Caco-2 (cell line): ENCODE measurements at regions of chr11 and their contacts with region 1.

Region 1: DNA sequence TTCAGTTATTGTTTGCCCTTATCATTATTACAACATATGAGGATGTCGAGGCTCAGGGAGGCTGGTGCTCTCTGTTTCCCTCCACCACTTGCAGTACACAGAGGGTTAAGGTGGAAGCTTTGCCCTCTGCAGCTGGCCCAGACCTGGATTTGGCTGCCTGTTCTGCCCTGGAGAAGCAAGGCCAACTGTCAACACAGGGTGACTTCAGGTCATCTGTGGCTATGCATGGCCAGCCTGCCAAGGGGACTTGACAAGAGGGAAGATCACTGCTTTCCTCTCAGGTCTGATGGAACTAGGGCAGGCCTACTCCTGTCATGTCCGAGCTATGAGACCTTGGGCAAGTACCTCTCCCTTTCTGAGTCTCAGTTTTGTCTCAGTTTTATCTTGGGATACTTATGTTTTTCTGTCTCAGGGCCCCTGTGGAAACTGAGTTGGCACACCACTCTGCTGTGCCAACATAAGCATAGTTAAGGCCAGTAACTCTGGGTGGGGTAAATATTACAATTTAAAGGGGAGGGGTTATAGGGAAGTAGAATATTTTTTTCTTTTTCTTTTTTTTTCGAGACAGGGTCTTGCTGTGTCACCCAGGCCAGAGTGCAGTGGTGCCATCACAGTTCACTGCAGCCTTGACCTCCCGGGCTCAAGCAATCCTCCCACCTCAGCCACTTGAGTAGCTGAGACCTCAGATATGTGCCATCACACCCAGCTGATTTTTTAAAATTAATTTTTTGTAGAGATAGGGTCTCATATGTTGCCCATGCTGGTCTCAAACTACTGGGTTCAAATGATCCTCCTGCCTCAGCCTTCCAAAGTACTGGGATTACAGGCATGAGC is 2.4 kb upstream of the THRSP start:
- DNase-seq: peak; percentile 52 to 65
- H3K4me3 ChIP-seq: no peak overlapping the region
- H3K4me3 Mint-ChIP-seq: no peak overlapping the region
- H3K27ac Mint-ChIP-seq: peak overlapping the region; percentile 70
- H3K4me1 ChIP-seq: peaks cover 31% of the 10 kb centered on the region
- H3K4me1 Mint-ChIP-seq: peaks cover 15% of the 10 kb centered on the region
- H3K27me3 ChIP-seq: no peaks in the 10 kb centered on the region
- H3K27me3 Mint-ChIP-seq: no peaks in the 10 kb centered on the region
- CTCF ChIP-seq: no peak

Region 2: DNA sequence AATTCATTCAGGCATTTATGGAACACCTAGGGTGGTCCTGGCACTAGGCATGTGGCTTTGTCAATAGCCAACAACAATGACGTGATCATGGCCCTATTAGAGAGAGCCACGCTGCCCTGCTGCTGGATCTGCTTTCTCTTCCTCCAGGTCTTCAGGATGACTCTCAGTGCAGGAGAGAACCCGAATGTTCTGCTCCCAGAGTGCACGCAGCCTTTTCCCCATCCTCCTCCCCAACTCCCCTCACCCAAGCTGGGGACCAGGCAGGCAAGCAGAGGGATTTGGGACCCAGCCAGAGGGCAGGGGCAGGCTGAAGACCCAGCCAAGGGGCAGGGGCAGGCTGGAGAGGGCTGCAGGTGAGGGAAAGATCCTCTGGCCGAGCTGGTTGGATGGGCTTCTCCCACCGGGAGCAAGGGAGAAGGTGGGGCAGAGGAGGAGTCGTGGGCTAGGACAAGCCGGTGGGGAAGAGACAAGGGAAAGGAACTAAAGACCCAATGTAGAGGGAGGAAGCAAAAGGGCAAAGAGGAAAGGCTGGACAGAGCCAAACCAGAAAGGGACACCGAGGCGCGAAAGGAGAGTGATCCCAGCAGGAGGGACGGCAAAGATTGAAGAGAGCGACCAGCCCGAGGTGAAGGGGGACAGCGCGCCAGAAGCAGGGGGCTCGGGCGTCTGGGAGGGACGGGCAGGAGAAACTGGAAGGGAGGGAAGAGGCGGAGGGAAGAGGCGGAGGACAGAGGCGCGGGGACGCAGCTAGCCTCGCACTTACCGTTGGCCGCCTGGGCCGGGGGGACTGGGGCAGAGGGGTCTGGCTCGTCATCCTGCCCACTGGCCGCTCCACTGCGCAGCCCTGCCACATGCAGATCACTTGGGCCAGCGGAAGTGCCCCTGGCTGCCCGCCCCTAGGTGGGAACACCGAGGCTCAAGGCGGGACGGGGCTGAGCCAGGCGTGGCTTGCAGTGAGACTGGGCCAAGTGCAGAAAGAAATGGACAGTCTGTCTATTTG is 38.6 kb before region 1 on chr11 and contains the start of gene KCTD14:
- CTCF ChIA-PET with region 1: no interaction called
- POLR2A ChIA-PET with region 1: no interaction called
- intact Hi-C with region 1: no loop called
- DNase-seq: peak; percentile 64 to 67
- H3K4me3 ChIP-seq: peak within 1 kb of the TSS; percentile 68
- H3K4me3 Mint-ChIP-seq: peak within 1 kb of the TSS; percentile 72
- H3K27ac Mint-ChIP-seq: peak within 1 kb of the TSS; percentile 14
- H3K4me1 ChIP-seq: peaks cover 21% of the 10 kb centered on the region; the same call in 1 of the 2 replicates
- H3K4me1 Mint-ChIP-seq: peaks cover 17% of the 10 kb centered on the region
- H3K27me3 ChIP-seq: no peaks in the 10 kb centered on the region
- H3K27me3 Mint-ChIP-seq: no peaks in the 10 kb centered on the region
- CTCF ChIP-seq: peak in 1 of 2 experiments; percentile 0
- total RNA-seq, gene KCTD14: 8.2 and 9.1 TPM in 2 replicates

Region 3: DNA sequence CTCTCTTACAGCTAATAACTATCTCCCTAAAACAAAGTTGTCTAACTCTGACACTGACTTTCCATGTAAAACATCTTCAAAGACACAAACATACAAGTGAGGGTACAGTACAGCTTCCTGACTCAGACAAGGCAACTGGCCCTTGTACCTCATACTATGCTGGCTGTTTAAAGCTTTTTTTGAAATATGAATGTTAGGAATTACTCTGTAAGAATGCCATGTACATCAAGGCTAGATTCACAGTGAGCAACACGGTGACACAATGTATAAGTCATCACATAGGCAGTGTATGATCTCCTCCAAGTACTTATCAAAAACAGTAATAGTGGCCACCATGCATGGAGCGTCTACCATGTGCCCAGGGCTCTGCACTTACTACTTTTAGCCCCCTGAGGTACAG is 49.5 kb after region 1 on chr11:
- CTCF ChIA-PET with region 1: no interaction called
- POLR2A ChIA-PET with region 1: no interaction called
- intact Hi-C with region 1: no loop called
- DNase-seq: no peak
- H3K4me3 ChIP-seq: no peak overlapping the region
- H3K4me3 Mint-ChIP-seq: no peak overlapping the region
- H3K27ac Mint-ChIP-seq: no peak overlapping the region
- H3K4me1 ChIP-seq: no peaks in the 10 kb centered on the region
- H3K4me1 Mint-ChIP-seq: peaks cover 6% of the 10 kb centered on the region
- H3K27me3 ChIP-seq: no peaks in the 10 kb centered on the region
- H3K27me3 Mint-ChIP-seq: no peaks in the 10 kb centered on the region
- CTCF ChIP-seq: no peak

Region 4: GRCh38 chr11:78139422-78140391 is 78.4 kb after region 1 on chr11 and contains the start of gene ALG8:
- CTCF ChIA-PET with region 1: no interaction called
- POLR2A ChIA-PET with region 1: interaction called, 10 read pairs
- intact Hi-C with region 1: no loop called
- DNase-seq: peak; percentile 99
- H3K4me3 ChIP-seq: peak within 1 kb of the TSS; percentile 49
- H3K4me3 Mint-ChIP-seq: peak within 1 kb of the TSS; percentile 90
- H3K27ac Mint-ChIP-seq: peak within 1 kb of the TSS; percentile 83
- H3K4me1 ChIP-seq: peaks cover 5% of the 10 kb centered on the region
- H3K4me1 Mint-ChIP-seq: peaks cover 21% of the 10 kb centered on the region
- H3K27me3 ChIP-seq: no peaks in the 10 kb centered on the region
- H3K27me3 Mint-ChIP-seq: no peaks in the 10 kb centered on the region
- CTCF ChIP-seq: no peak
- total RNA-seq, gene ALG8: 188 and 191 TPM in 2 replicates

Region 5: GRCh38 chr11:78179459-78180069 is 118.3 kb after region 1 on chr11:
- CTCF ChIA-PET with region 1: no interaction called
- POLR2A ChIA-PET with region 1: no interaction called
- intact Hi-C with region 1: no loop called
- DNase-seq: peak; percentile 68 to 74
- H3K4me3 ChIP-seq: no peak overlapping the region
- H3K4me3 Mint-ChIP-seq: no peak overlapping the region
- H3K27ac Mint-ChIP-seq: peak overlapping the region; percentile 40
- H3K4me1 ChIP-seq: peaks cover 7% of the 10 kb centered on the region; the same call in 1 of the 2 replicates
- H3K4me1 Mint-ChIP-seq: peaks cover 11% of the 10 kb centered on the region
- H3K27me3 ChIP-seq: no peaks in the 10 kb centered on the region
- H3K27me3 Mint-ChIP-seq: no peaks in the 10 kb centered on the region
- CTCF ChIP-seq: peak in 1 of 2 experiments; percentile 16